ENCODE measurements at regions of chr1 and their contacts with region 1.

Region 1: GRCh38 chr1:224434691-224435317 is at the start of gene WDR26:
- DNase-seq: peak; percentile 88
- H3K4me3 Mint-ChIP-seq: peak within 1 kb of the TSS; percentile 93
- H3K27ac Mint-ChIP-seq: peak within 1 kb of the TSS; percentile 95
- H3K4me1 Mint-ChIP-seq: peaks cover 54% of the 10 kb centered on the region
- H3K27me3 Mint-ChIP-seq: no peaks in the 10 kb centered on the region
- total RNA-seq, gene WDR26: 114 to 118 TPM

Region 2: DNA sequence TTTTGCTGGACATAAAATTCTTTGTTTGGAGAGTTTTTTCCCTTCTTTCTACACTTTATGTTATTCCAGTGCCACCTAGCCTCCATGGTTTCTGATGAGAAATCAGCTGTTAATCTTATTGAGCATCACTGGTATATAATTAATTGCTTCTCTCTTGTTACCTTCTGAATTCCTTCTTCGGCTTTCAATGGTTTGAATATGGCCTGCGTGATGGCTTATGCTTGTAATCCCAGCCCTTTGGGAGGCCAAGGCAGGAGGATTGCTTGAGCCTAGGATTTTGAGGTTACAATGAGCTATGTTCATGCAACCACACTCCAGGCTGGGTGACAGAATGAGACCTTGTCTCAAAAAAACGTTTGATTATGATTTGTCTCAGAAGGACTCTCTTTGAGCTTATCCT is 91.1 kb before region 1 on chr1:
- CTCF ChIA-PET with region 1: no interaction called
- POLR2A ChIA-PET with region 1: no interaction called
- DNase-seq: no peak
- H3K4me3 Mint-ChIP-seq: no peak overlapping the region
- H3K27ac Mint-ChIP-seq: no peak overlapping the region
- H3K4me1 Mint-ChIP-seq: peaks cover 12% of the 10 kb centered on the region
- H3K27me3 Mint-ChIP-seq: peaks cover 4% of the 10 kb centered on the region

Region 3: DNA sequence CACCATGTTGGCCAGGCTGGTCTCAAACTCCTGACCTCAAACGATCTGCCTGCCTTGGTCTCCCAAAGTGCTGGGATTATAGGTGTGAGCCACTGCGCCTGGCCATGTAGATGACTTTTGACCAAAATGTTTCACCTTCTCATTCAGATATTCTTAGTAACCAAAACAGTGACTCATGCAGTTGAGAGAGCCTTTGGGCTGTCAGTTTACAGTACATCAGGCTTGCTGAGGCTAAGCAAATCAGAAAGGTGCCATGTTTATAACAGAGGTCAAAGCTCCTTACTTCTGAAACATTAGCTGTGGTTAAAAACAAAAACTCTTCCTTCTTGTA is 57.2 kb before region 1 on chr1:
- CTCF ChIA-PET with region 1: no interaction called
- POLR2A ChIA-PET with region 1: interaction called, 31 read pairs
- DNase-seq: peak; percentile 49
- H3K4me3 Mint-ChIP-seq: peak overlapping the region; percentile 25
- H3K27ac Mint-ChIP-seq: peak overlapping the region; percentile 89
- H3K4me1 Mint-ChIP-seq: peaks cover 93% of the 10 kb centered on the region
- H3K27me3 Mint-ChIP-seq: no peaks in the 10 kb centered on the region

Region 4: DNA sequence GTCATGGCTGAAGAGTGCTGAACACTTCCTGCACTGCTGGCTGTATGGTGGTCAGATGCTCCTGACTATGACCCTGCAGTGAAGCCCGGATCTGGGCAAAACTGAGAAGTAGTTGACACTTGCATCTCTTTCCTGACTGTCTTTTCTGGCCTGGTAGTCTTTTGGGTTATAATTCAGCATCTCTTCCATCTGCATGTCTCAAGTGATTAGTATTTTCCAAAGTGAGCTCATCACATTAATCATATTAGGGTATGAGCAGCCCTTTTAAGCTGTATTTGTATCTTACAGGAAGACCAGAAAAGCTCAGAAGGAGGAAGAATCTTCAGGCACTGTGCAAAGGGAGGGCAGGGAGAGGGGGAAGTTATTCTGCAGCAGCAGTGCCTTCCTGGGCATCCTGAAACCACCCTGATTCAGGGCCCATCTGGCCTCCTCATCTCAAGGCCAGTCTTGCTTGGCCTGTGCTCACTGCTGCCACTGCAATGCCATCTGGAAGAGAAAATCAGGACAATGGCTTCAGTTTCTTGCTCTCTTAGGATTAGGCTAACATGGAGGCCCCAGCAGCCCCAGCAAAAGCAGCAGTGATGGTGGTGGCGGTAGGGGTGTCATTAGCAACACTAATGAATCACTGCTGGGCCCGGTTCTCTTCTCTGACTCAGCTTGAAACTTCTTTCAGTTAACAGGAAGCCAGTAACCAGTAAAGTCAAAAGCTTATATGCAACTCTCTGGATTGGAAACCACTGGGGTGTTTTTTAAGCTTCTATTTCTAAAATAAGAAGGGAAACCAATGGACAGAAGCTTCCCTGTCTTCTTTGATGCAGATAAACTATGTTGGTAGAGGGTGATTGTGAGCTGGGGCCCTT is 63.1 kb after region 1 on chr1:
- CTCF ChIA-PET with region 1: interaction called, 4 read pairs
- POLR2A ChIA-PET with region 1: interaction called, 16 read pairs
- DNase-seq: peak; percentile 86
- H3K4me3 Mint-ChIP-seq: peak overlapping the region; percentile 52
- H3K27ac Mint-ChIP-seq: peak overlapping the region; percentile 95
- H3K4me1 Mint-ChIP-seq: peaks cover 63% of the 10 kb centered on the region
- H3K27me3 Mint-ChIP-seq: no peaks in the 10 kb centered on the region